Lower leg skin (tissue), 4 donors: ENCODE measurements at regions of chr13 and their contacts with region 1.

Region 1: DNA sequence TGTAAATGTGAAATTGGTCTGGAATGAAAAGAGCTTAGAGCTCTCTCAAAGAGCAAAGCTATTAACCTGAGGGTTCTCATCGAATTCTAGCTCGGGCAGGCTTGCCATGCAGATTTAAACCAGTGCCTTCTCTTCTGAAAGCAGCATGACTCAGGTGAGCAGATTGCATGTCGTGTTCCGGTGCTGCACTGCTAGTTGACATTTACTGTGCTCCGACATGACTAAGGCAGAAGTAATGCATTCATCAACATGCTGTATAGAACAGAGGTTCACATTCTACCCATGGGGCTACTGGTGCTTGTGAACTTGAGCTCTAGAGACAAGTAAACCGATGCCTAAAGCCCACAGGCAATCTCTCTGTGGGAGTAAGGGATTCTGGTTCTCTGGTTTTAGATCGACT is 947.7 kb downstream of the EFNB2 start:
- DNase-seq: no peak
- H3K4me3 ChIP-seq: no peak overlapping the region
- CTCF ChIP-seq: no peak
- POLR2A ChIP-seq: no peak

Region 2: GRCh38 chr13:104442541-104442940 is 1145.2 kb before region 1 on chr13:
- intact Hi-C with region 1: no loop called
- DNase-seq: no peak
- H3K4me3 ChIP-seq: no peak overlapping the region
- CTCF ChIP-seq: no peak
- POLR2A ChIP-seq: no peak

Region 3: DNA sequence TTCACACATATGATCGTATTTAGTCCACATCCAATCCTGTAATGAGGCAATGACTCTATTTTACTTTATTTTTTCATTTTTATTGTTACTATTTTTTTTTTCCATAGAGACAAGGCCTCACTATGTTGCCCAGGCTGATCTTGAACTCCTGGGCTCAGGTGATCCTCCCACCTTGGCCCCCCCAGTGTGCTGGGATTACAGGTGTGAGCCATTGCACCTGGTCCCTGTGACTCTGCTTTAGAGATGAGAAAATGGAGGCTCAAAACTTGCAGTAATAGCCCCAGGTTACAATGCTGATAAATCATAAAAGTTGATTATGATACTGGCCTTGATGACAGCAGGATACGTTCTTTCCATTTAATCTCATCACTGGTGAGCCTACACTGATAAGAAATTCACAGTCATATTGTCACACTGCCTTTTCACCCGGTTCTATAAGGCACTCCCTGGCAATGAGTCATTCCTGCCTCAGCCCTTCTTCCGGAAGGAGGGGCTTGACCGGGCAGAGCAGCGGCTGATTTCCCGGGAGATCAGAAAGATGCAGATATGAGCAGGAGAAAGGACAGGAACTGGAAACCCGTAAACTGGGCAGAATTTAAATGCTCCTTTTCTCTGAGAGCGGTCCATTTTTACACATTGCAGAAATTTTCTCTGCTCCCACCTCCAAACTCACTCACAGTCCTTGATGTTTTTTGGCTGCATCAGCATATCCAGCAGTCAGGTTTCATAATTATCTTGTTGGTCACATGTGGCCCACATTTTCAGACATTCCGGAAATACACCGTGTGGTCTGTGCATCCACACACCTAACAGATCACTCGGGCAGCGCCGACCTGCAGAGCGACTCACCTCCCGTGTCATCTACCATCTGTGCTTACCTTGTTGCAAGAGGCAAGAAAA is 331.3 kb after region 1 on chr13:
- intact Hi-C with region 1: loop called (anchors 10 kb)
- DNase-seq: no peak
- H3K4me3 ChIP-seq: no peak overlapping the region
- CTCF ChIP-seq: no peak
- POLR2A ChIP-seq: no peak